ENCODE measurements at regions of chr17 and their contacts with region 1.

Region 1: GRCh38 chr17:27939474-27940465 is 46.6 kb upstream of the LYRM9 start:
- DNase-seq: no peak
- ATAC-seq: no peak
- H3K4me3 ChIP-seq: no peak overlapping the region
- H3K27ac ChIP-seq: no peak overlapping the region
- H3K4me1 ChIP-seq: no peaks in the 10 kb centered on the region
- H3K27me3 ChIP-seq: peaks cover 0 to 2% (median 0%) of the 10 kb centered on the region in 9 donors
- CTCF ChIP-seq: no peak
- POLR2A ChIP-seq: no peak

Region 2: DNA sequence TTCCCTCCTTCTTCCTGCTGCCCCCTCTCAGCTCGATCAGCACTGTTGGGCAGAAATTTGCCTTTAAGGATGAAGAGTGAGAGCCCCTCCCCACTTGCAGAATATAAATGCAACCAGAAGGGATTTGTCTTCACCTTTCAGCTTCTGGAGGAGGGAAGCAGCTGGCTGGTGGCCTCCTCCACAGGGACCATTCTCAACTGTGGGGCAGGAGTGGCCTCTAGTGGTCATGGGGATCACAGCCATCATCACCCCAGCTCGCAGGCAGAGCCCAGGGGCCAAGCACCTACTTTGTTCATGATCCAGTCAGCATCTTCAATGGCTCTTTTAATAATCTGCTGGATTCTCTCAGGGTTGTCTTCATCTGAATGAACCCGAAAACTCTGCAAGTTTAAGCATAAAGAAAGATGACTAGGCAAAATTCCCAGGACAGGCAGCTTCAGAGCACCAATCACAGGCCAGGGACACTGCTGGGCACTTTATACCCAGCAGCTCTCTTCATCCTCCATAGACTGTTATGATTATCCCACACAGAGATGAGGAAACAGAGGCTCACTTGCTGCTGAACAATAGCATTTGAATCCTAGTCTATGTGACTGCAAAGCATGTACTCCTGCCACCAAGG is 59.7 kb before region 1 on chr17:
- intact Hi-C with region 1: no loop called
- DNase-seq: peak; percentile 66 to 85 (median 70)
- ATAC-seq: peak; percentile 85 to 96 (median 92)
- H3K4me3 ChIP-seq: no peak overlapping the region
- H3K27ac ChIP-seq: no peak overlapping the region
- H3K4me1 ChIP-seq: peaks cover 0 to 14% (median 1%) of the 10 kb centered on the region in 12 donors
- H3K27me3 ChIP-seq: no peaks in the 10 kb centered on the region
- CTCF ChIP-seq: peak; percentile 73 to 90 (median 83)
- POLR2A ChIP-seq: no peak

Region 3: DNA sequence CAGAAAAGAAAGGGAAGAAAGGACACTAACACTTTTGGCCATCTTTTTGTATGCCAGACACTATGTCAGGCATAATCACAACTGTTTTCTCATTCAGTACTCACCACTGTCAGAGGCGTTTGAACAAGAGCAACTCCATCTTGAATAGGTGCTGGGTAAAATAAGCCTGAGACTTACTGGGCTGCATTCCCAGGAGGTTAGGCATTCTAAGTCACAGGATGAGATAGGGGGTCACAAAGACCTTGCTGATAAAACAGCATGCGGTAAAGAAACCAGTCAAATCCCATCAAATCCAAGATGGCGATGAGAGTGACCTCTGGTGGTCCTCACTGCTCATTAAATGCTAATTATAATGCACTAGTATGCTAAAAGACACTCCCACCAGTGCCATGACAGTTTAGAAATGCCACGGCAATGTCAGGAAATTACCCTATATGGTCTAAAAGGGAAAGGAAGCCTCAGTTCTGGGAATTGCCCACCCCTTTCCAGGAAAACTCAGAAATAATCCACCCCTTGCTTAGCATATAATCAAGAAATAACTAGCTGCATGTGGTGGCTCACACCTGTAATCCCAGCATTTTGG is 31.7 kb before region 1 on chr17:
- intact Hi-C with region 1: loop called in 1 of 10 experiments (anchors 5 kb)
- DNase-seq: no peak
- ATAC-seq: no peak
- H3K4me3 ChIP-seq: no peak overlapping the region
- H3K27ac ChIP-seq: no peak overlapping the region
- H3K4me1 ChIP-seq: no peaks in the 10 kb centered on the region
- H3K27me3 ChIP-seq: peaks cover 0 to 3% (median 0%) of the 10 kb centered on the region in 9 donors
- CTCF ChIP-seq: no peak
- POLR2A ChIP-seq: no peak

Region 4: GRCh38 chr17:27985306-27985705 is 45.5 kb after region 1 on chr17:
- intact Hi-C with region 1: loop called in 2 of 10 experiments (anchors 5 to 10 kb)
- DNase-seq: peak in 3 of 5 donors; percentile 30 to 37 (median 30)
- ATAC-seq: peak in 3 of 4 donors; percentile 55 to 75 (median 73)
- H3K4me3 ChIP-seq: peak overlapping the region in 1 of 12 donors; percentile 9
- H3K27ac ChIP-seq: peak overlapping the region; percentile 12 to 79 (median 48)
- H3K4me1 ChIP-seq: peaks cover 0 to 27% (median 11%) of the 10 kb centered on the region in 12 donors
- H3K27me3 ChIP-seq: peaks cover 0 to 8% (median 0%) of the 10 kb centered on the region in 9 donors
- CTCF ChIP-seq: no peak
- POLR2A ChIP-seq: no peak

Region 5: GRCh38 chr17:27993723-27994310 is 54.0 kb after region 1 on chr17:
- intact Hi-C with region 1: loop called in 2 of 10 experiments (anchors 5 to 10 kb)
- DNase-seq: no peak
- ATAC-seq: no peak
- H3K4me3 ChIP-seq: no peak overlapping the region
- H3K27ac ChIP-seq: no peak overlapping the region
- H3K4me1 ChIP-seq: peaks cover 0 to 4% (median 0%) of the 10 kb centered on the region in 12 donors
- H3K27me3 ChIP-seq: no peaks in the 10 kb centered on the region
- CTCF ChIP-seq: no peak
- POLR2A ChIP-seq: no peak